ENCODE measurements at regions of chr6 and their contacts with region 1.

Region 1: GRCh38 chr6:32774426-32774825 is 11.1 kb upstream of the HLA-DQB2 start:
- DNase-seq: no peak
- H3K4me3 ChIP-seq: no peak overlapping the region
- H3K27ac ChIP-seq: no peak overlapping the region
- H3K4me1 ChIP-seq: no peaks in the 10 kb centered on the region
- H3K27me3 ChIP-seq: peaks cover 0 to 22% (median 0%) of the 10 kb centered on the region in 7 donors
- CTCF ChIP-seq: no peak
- POLR2A ChIP-seq: no peak

Region 2: GRCh38 chr6:32462609-32463008 is 311.8 kb before region 1 on chr6:
- intact Hi-C with region 1: no loop called
- DNase-seq: no peak
- H3K4me3 ChIP-seq: no peak overlapping the region
- H3K27ac ChIP-seq: no peak overlapping the region
- H3K4me1 ChIP-seq: peaks cover 0 to 13% (median 0%) of the 10 kb centered on the region in 6 donors
- H3K27me3 ChIP-seq: peaks cover 0 to 29% (median 0%) of the 10 kb centered on the region in 7 donors
- CTCF ChIP-seq: no peak
- POLR2A ChIP-seq: no peak

Region 3: GRCh38 chr6:32551410-32551809 is 223.0 kb before region 1 on chr6:
- intact Hi-C with region 1: no loop called
- DNase-seq: no peak
- H3K4me3 ChIP-seq: no peak overlapping the region
- H3K27ac ChIP-seq: no peak overlapping the region
- H3K4me1 ChIP-seq: no peaks in the 10 kb centered on the region
- H3K27me3 ChIP-seq: no peaks in the 10 kb centered on the region
- CTCF ChIP-seq: no peak
- POLR2A ChIP-seq: no peak

Region 4: GRCh38 chr6:32659856-32660595 is 114.4 kb before region 1 on chr6:
- intact Hi-C with region 1: no loop called
- DNase-seq: peak; percentile 79
- H3K4me3 ChIP-seq: no peak overlapping the region
- H3K27ac ChIP-seq: peak overlapping the region in 3 of 8 donors; percentile 32 to 48 (median 44)
- H3K4me1 ChIP-seq: peaks cover 0 to 19% (median 9%) of the 10 kb centered on the region in 6 donors
- H3K27me3 ChIP-seq: no peaks in the 10 kb centered on the region
- CTCF ChIP-seq: no peak
- POLR2A ChIP-seq: no peak

Region 5: DNA sequence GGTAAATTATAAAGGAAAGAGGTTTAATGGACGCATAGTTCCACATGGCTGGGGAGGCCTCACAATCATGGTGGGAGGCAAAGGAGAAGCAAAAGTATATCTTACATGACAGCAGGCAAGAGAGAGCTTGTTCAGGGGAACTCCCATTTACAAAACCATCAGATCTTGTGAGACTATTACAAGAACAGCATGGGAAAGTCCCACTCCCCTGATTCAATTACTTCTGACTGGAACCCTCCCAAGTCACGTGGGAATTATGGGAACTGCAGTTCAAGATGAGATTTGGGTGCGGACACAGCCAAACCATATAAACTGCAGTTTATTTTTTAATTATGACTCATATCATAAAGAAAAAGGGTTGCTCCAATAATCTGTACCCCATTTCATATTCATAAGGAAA is 55.5 kb before region 1 on chr6:
- intact Hi-C with region 1: loop called (anchors 10 kb)
- DNase-seq: no peak
- H3K4me3 ChIP-seq: no peak overlapping the region
- H3K27ac ChIP-seq: no peak overlapping the region
- H3K4me1 ChIP-seq: no peaks in the 10 kb centered on the region
- H3K27me3 ChIP-seq: no peaks in the 10 kb centered on the region
- CTCF ChIP-seq: no peak
- POLR2A ChIP-seq: no peak